SK-N-SH (cell line): ENCODE measurements at regions of chr19 and their contacts with region 1.

Region 1: DNA sequence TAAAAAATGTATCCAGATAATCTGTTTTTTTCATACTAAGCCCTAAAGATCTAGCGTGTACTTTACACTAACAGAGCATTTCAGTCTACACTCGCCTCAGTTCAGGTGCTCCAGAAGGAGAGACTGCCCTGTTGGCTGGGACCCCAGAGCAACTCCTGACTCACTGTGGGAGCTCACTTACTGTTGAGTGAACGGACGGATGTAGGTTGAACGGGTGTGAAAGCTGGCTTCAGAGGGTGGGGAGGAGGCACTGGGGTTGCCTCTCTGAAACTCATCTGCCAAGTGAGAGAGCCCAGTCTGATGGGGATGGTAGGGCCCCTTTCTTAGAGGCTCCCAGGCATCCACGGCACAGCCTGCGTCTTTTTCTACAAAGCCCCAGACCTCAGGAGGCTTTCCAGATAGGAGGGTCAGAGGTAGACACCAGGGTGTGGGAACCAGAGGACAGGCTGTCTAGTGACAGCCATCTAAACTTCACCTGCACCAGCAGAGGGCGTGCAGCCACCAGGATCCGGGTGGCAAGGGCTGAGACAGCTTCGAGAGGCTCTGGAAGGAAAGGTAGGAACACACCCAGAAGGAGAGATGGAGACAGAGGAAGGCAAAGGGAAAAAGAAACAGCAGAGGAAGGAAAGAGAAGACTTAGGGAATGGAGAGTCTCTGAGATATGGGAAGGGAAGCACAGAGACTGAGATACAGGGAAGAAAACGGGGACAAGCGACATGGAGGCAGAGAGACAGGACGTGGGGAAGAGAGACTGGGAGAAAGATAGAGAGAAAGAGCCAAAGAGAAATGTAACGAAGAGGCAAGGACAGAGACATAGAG is 3.7 kb downstream of the KASH5 start:
- DNase-seq: peak; percentile 88
- H3K4me3 ChIP-seq: peak overlapping the region in 1 of 2 experiments; percentile 33; a peak in 1 of 4 replicates
- H3K27ac ChIP-seq: no peak overlapping the region
- H3K4me1 ChIP-seq: peaks cover 0 to 3% of the 10 kb centered on the region in 2 experiments; a peak in 1 of 4 replicates
- H3K27me3 ChIP-seq: peaks cover 32% of the 10 kb centered on the region
- CTCF ChIP-seq: peak; percentile 85
- EP300 ChIP-seq: no peak
- RAD21 ChIP-seq: peak; percentile 98

Region 2: GRCh38 chr19:49378512-49378911 is 13.3 kb before region 1 on chr19:
- CTCF ChIA-PET with region 1: interaction called, 24 read pairs
- POLR2A ChIA-PET with region 1: no interaction called
- DNase-seq: no peak
- H3K4me3 ChIP-seq: no peak overlapping the region
- H3K27ac ChIP-seq: no peak overlapping the region
- H3K4me1 ChIP-seq: no peaks in the 10 kb centered on the region
- H3K27me3 ChIP-seq: peaks cover 21% of the 10 kb centered on the region
- CTCF ChIP-seq: no peak
- EP300 ChIP-seq: no peak
- RAD21 ChIP-seq: no peak

Region 3: DNA sequence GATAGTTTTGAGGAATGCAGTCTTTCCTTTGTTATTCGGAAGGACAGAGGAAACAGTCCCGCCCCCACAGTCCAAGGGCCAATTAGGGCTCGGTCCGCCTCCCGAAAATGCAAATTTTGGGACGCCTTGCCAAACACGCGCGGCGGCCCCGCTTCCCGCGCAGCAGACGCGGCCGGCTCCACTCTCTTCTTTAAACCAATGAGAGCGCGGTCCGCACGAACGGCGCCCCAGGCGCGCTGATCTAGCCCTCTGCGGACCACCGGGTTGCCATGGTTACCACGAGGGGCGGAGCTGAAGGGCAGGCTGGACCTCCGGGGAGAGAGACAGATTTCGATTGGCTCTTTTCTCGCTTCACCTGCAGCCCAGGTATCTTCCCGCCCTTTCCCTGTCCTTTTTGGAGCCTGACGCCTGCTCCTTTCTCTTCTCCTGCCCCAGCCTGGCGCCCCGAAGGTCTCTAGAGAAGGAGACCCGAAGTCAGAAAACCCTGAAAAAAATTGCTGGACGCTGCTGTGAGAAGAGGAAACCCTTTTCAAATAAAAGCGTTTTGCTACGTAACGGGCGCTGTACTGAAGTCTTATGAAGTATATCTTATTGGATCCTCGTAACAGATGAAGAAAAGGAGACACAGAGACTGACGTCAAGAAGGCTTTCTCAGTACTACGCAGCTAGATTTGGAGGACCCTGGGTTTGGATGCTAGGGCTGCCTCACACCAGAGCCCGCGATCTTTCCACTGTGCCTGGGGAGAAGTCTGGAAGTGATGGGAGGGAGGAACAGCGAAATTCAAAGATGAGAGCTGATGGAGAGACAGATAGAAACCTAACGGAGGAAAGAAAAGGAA is 29.5 kb after region 1 on chr19:
- CTCF ChIA-PET with region 1: interaction called, 108 read pairs
- POLR2A ChIA-PET with region 1: no interaction called
- DNase-seq: peak; percentile 95
- H3K4me3 ChIP-seq: peak overlapping the region in 1 of 2 experiments; percentile 14; a peak in 2 of 4 replicates
- H3K27ac ChIP-seq: no peak overlapping the region
- H3K4me1 ChIP-seq: peaks cover 0 to 4% of the 10 kb centered on the region in 2 experiments; a peak in 2 of 4 replicates
- H3K27me3 ChIP-seq: peaks cover 99% of the 10 kb centered on the region
- CTCF ChIP-seq: no peak
- EP300 ChIP-seq: no peak
- RAD21 ChIP-seq: no peak

Region 4: GRCh38 chr19:49436369-49437017 is 44.7 kb after region 1 on chr19:
- CTCF ChIA-PET with region 1: interaction called, 149 read pairs
- POLR2A ChIA-PET with region 1: no interaction called
- DNase-seq: peak; percentile 84
- H3K4me3 ChIP-seq: peak overlapping the region in 1 of 2 experiments; percentile 21; a peak in 1 of 4 replicates
- H3K27ac ChIP-seq: no peak overlapping the region
- H3K4me1 ChIP-seq: peaks cover 0 to 21% of the 10 kb centered on the region in 2 experiments; a peak in 1 of 4 replicates
- H3K27me3 ChIP-seq: peaks cover 93% of the 10 kb centered on the region
- CTCF ChIP-seq: no peak
- EP300 ChIP-seq: no peak
- RAD21 ChIP-seq: no peak